Heart left ventricle (tissue), 16 donors: ENCODE measurements at regions of chr2 and their contacts with region 1.

Region 1: DNA sequence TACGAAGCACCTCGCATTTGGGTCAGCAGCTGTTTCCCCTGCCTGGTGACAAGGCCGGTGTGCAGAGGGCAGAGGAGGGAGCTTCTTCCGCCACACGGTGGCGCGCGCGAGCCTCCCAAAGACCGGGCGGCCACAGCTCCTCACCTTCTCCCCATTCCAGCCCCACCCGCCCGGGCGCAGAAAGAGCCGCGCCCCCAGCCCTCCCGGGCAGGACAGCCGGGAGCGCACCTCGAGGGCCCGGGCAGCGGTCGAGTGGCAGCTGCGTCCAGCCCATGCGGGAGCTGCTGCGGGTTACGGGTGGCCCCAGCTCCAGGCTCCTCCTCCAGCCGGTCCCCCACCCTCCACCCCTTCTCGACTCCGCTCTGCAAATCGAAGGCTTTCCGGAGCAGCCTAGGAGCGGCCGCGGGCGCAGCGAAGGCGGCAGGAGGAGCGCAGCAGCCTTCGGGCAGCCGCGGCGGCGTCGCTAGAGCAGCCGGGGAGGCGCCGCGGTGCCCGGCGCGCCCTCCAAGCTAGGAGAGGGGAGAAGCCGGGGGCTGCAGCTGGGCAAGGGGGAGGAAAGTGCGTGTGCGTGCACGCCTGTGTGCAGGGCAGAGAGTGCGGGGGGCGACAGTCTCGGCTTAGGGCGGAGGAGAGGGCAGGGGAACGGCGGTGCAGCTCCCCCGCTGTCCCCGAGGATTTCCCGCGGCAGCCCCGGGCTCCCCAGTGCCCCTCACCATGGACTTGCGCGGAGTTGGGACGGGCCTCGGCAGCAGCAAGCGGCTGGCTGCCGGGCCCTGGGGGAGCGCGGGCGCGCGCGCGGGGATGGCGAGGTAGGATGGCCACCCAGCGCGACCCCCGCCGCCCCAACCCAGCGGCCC is at the start of gene CCDC85A:
- DNase-seq: peak; percentile 83 to 92 (median 86)
- ATAC-seq: peak; percentile 89 to 95 (median 94)
- H3K4me3 ChIP-seq: peak within 1 kb of the TSS; percentile 61 to 86 (median 74)
- H3K27ac ChIP-seq: peak within 1 kb of the TSS; percentile 69 to 94 (median 85)
- H3K4me1 ChIP-seq: peaks cover 0 to 50% (median 7%) of the 10 kb centered on the region in 12 donors
- H3K27me3 ChIP-seq: peaks cover 0 to 33% (median 3%) of the 10 kb centered on the region in 9 donors
- CTCF ChIP-seq: peak; percentile 88 to 99 (median 95)
- POLR2A ChIP-seq: peak in 1 of 2 donors; percentile 56
- total RNA-seq, gene CCDC85A: 3.3 to 14.2 (median 4.5) TPM

Region 2: DNA sequence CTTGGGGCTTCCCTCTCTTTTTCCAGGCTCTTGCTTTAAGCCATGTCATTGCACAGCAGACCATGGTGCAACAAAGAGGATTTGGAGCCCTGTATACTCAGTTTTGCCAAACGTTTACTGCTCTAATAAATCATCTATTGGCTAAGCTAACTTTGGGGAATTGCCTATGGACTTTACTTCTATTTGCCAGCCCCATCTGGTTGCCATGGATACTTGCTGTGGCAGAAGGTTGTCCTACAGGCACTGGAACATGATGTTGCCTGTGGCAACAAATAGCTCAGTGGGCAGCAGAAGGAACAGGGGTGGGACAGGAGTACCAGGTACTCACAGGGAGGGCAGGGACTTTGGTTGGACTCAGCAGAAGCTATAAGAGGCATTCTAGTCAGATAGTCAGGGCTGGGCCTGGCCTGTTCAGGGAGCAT is 129.6 kb after region 1 on chr2:
- intact Hi-C with region 1: loop called in 3 of 10 experiments (anchors 2 to 10 kb)
- DNase-seq: no peak
- ATAC-seq: no peak
- H3K4me3 ChIP-seq: no peak overlapping the region
- H3K27ac ChIP-seq: peak overlapping the region in 10 of 12 donors; percentile 16 to 75 (median 65)
- H3K4me1 ChIP-seq: peaks cover 0 to 30% (median 10%) of the 10 kb centered on the region in 12 donors
- H3K27me3 ChIP-seq: no peaks in the 10 kb centered on the region
- CTCF ChIP-seq: no peak
- POLR2A ChIP-seq: no peak

Region 3: GRCh38 chr2:56522605-56523089 is 338.8 kb after region 1 on chr2:
- intact Hi-C with region 1: loop called in 1 of 10 experiments (anchors 10 kb)
- DNase-seq: peak in 4 of 5 donors; percentile 51 to 64 (median 60)
- ATAC-seq: peak; percentile 95 to 97 (median 96)
- H3K4me3 ChIP-seq: peak overlapping the region in 1 of 12 donors; percentile 5
- H3K27ac ChIP-seq: peak overlapping the region; percentile 12 to 84 (median 69)
- H3K4me1 ChIP-seq: peaks cover 0 to 9% (median 3%) of the 10 kb centered on the region in 12 donors
- H3K27me3 ChIP-seq: no peaks in the 10 kb centered on the region
- CTCF ChIP-seq: no peak
- POLR2A ChIP-seq: no peak

Region 4: DNA sequence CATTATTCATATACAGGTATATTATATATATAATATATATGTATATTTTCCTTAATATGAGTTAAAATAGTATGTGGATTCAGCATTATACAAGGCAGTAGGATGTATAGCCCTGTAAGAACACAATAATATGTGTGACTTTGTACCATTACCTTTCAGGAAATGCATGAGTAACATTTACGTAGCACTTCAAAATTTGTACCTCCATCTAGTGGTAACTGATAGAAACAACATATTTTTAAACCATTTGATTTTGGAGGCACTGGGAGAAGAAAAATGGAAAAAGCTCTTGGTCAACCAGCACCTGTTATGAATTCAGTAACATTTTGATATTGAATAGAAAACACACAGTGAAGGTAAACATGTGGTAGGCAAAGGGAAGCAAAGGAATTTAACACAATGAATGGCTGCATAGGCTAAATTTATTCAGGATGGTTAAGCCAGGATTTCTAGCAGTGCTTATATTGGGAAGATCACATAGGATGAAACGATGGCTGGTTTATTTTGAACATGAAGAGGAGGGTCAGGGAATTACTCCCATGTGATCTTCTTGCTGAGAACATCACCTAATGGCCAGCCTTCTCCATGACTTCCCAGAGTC is 565.4 kb after region 1 on chr2:
- intact Hi-C with region 1: loop called (anchors 1 to 5 kb)
- DNase-seq: no peak
- ATAC-seq: no peak
- H3K4me3 ChIP-seq: no peak overlapping the region
- H3K27ac ChIP-seq: no peak overlapping the region
- H3K4me1 ChIP-seq: no peaks in the 10 kb centered on the region
- H3K27me3 ChIP-seq: no peaks in the 10 kb centered on the region
- CTCF ChIP-seq: peak; percentile 21 to 70 (median 59)
- POLR2A ChIP-seq: no peak

Region 5: GRCh38 chr2:57509189-57509588 is 1325.3 kb after region 1 on chr2:
- intact Hi-C with region 1: loop called in 2 of 10 experiments (anchors 5 to 10 kb)
- DNase-seq: no peak
- ATAC-seq: no peak
- H3K4me3 ChIP-seq: no peak overlapping the region
- H3K27ac ChIP-seq: no peak overlapping the region
- H3K4me1 ChIP-seq: no peaks in the 10 kb centered on the region
- H3K27me3 ChIP-seq: no peaks in the 10 kb centered on the region
- CTCF ChIP-seq: no peak
- POLR2A ChIP-seq: no peak